ENCODE measurements at regions of chr18 and their contacts with region 1.

Region 1: GRCh38 chr18:3454365-3455089 is 4.6 kb downstream of the TGIF1 start:
- DNase-seq: peak in 1 of 2 donors; percentile 56
- ATAC-seq: no peak
- H3K4me3 ChIP-seq: peak overlapping the region in 9 of 10 donors; percentile 4 to 93 (median 69)
- H3K27ac ChIP-seq: peak overlapping the region in 9 of 10 donors; percentile 87 to 100 (median 97)
- H3K4me1 ChIP-seq: peaks cover 3 to 59% (median 28%) of the 10 kb centered on the region in 9 donors
- H3K27me3 ChIP-seq: no peaks in the 10 kb centered on the region
- CTCF ChIP-seq: peak; percentile 55 to 86 (median 69)

Region 2: DNA sequence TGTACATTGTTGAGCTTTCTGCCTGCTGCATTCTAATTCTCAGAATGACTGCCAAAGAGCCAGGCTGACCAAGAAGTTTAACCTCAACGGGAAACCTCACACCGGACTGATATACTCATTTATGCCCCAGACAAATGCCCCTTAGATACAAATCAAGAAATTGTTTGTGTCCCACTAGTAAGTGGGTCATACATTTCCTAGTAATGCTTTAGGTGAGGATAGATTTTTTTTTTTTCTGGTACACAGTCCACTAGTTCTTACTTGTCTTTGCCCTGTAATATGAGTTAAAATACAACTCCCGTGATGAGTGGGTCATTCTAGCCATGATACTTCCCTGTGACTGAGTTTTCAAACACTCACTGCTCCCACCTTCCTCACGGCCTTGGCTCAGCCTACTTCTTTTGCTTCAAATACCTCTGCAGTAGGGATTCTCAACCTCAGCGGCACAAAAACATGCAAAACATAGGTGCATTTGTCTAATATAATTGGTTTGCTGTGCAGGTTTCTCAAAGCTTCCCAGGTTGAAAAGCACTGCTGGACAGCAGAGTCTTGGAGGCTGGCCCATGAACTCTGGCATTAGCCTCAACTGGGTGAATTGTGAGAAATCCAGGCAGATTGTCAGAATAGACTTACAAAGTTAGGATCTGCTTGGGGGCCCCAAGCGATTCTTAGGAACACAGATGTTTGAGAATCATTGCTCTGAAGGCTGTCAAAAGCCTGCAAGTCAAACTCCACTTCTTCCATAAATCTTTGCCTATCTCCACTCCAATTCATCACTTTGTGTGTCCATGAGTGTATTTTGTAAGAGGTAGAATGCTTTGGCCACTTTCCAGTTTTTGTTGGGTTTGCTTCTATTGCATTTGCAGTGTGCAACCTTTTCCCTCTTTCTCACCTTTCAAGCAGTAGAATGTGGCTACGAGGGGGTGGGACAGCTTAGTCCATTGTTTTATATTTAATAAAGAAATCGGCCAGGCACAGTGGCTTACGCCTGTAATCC is 30.9 kb after region 1 on chr18:
- intact Hi-C with region 1: no loop called
- DNase-seq: no peak
- ATAC-seq: no peak
- H3K4me3 ChIP-seq: no peak overlapping the region
- H3K27ac ChIP-seq: no peak overlapping the region
- H3K4me1 ChIP-seq: no peaks in the 10 kb centered on the region
- H3K27me3 ChIP-seq: peaks cover 0 to 9% (median 0%) of the 10 kb centered on the region in 7 donors
- CTCF ChIP-seq: no peak

Region 3: DNA sequence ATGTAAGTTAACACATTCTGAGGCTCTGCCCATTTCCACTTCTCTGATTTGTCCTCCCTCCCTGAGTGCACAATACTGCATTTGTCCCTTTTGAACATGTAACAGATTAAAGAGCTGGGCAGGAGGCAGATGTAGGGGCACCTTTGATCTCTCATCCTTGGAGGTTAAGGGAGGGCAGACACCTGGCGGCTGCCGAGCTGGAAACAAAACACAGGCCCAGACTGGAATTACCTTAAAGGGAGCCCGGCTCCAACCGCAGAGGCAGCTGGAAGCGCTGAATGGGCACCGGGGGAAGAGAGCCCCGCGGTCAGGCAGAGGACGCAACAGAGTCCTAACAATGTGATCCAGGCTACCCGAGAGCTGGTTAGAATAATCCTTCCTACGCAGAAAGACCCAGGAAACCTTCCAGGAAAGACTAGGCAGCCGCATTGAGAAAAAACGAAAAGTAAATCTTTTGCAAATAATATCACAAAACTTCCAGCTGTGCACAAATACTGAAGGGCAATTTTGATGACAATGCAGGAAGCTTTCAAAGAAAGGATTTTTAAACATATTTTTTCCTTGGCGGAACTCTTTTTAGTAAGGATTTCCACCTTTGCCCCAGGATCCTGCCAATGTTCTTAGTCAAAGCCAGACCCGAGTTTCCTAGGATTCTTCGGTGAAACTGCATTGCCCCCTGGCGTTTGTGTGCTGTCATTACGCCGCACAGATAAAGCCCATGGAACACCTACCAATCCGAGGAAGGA is 211.4 kb after region 1 on chr18:
- intact Hi-C with region 1: loop called (anchors 1 to 10 kb)
- DNase-seq: peak; percentile 77 to 86
- ATAC-seq: peak; percentile 88 to 97 (median 94)
- H3K4me3 ChIP-seq: peak overlapping the region in 8 of 10 donors; percentile 10 to 41 (median 38)
- H3K27ac ChIP-seq: peak overlapping the region in 9 of 10 donors; percentile 41 to 83 (median 69)
- H3K4me1 ChIP-seq: peaks cover 0 to 34% (median 8%) of the 10 kb centered on the region in 9 donors
- H3K27me3 ChIP-seq: no peaks in the 10 kb centered on the region
- CTCF ChIP-seq: peak; percentile 86 to 95 (median 94)

Region 4: DNA sequence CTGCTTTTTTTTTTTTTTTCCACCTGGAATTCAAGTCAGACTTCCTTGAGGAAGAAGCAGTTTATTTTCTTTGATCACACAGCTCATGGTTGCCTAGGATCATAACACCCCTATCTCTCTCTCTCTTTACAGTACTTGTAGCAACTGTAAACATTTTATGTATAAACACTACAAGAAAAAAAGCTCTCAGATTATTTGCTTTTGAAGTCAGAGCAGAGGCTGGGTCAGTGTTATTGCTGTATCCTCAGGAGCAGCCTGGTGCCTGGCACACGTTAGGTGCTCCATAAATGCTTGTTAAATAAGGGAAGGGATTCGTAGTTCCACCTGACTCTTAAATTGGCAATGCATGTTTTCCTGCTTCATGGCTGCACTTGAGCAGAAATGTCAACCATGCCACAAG is 216.7 kb after region 1 on chr18:
- intact Hi-C with region 1: loop called (anchors 1 to 10 kb)
- DNase-seq: no peak
- ATAC-seq: no peak
- H3K4me3 ChIP-seq: no peak overlapping the region
- H3K27ac ChIP-seq: no peak overlapping the region
- H3K4me1 ChIP-seq: peaks cover 0 to 5% (median 0%) of the 10 kb centered on the region in 9 donors
- H3K27me3 ChIP-seq: no peaks in the 10 kb centered on the region
- CTCF ChIP-seq: no peak